Posterior cingulate gyrus (tissue), 11 donors: ENCODE measurements at regions of chr13 and their contacts with region 1.

Region 1: DNA sequence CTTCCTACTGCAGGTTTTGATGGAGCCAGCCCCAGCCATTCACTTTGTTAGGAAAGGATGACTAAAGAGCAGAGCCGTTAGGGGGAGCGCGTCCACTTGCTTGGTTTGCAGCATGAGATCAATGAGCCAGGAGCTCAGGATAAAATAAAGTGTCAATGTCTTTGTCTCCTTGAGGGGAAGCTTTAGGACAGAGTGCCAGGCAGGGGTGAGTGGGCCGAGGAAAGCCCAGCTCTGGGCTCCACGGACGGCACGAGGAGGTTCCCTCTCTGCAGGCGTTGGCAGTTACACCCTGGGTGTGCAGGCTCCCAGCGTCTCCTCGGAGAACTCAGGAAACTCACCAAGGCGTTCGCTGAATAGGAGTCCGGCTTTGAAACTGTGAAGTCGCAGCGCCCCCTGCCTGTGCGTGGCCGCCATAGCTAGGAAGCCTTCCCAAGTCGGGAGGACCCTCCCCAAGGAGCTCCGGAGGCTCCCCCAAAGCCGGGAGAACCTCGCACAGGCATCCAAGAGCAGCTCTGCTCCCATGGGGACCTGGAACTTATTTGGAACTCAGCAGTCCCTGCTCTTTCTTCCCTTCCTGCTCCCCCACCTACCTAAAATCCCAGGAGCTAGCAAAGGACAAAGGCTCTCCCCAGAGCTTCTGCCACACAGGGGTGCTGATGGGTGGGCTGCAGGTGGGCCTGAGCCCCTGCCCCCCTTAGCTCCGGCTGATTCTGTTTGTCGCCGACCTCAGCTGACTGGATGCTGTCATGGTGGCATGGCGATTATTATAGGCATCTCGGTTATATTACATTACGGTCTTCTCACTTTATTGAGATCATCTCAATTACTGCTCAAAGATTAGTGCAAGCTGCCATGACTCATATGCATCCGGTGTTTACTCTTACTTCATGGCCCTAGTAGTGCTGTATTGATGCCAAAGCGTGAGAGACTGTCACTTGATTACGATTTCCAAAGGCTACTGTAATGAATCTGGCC is 34.4 kb downstream of the GSX1 start:
- DNase-seq: peak; percentile 63 to 98 (median 82)

Region 2: DNA sequence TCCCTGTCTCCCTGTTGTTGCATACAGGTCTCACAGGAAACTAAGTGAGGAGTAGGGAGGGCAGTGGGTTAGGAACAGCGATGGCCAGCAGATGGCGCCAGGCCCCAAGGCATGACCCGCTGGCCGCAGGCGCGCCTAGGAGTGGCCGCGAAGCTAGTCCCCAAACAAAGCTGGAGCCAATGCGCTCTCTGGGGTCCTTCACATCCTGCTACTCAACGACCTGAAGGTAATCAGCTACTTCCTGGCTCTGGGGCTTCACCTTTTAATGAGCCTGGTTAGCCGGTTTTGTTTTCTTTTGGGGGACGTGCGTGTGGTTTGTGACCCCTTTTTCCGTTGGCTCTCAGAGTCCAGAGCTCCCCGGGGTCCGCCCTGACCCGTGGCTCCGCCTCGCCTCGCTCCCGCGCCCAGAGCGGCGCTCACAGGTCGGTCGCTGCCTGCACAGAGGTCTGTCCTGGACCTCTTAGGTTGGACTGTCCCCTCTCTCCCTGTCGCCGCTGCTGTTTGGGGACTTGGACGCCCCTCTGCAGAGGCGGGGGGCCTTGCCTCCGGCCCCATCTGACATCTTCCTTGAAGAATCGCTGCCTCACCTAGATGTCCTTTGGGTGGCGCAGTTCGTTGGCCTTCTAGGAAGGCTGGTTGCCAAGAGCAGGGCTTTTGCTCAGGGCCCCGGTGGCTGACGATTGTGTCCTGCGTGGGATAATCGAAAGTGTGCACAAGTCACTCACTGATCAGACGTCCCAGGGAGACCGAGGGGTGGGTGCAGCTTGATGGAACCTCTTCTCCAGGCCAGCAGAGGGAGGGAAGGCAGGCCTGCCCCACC is 464.4 kb before region 1 on chr13:
- intact Hi-C with region 1: loop called (anchors 1 kb)
- DNase-seq: peak; percentile 73 to 97 (median 86)

Region 3: GRCh38 chr13:27533155-27533643 is 293.5 kb before region 1 on chr13:
- intact Hi-C with region 1: loop called (anchors 1 kb)
- DNase-seq: peak; percentile 57 to 97 (median 86)

Region 4: DNA sequence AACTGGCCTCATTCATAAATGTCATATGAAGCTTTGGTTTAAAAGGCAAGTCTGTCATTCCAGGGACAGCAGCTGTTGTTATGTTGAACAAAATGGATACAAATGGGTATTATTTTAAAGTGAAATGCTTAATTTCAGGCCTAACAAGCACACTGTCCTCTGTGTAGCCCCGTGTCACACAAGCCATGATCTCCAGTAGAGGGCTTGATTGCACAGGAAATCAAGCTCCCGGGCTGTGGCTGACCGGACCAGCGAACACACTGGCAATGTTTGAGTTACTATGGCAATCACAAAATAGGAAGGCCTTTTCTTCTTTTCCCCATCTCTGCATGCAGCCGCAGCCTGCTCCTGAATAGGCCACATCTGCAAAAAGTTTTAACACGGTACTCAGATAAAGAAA is 98.4 kb before region 1 on chr13:
- intact Hi-C with region 1: loop called (anchors 2 kb)
- DNase-seq: peak in 6 of 10 donors; percentile 19 to 91 (median 43)

Region 5: DNA sequence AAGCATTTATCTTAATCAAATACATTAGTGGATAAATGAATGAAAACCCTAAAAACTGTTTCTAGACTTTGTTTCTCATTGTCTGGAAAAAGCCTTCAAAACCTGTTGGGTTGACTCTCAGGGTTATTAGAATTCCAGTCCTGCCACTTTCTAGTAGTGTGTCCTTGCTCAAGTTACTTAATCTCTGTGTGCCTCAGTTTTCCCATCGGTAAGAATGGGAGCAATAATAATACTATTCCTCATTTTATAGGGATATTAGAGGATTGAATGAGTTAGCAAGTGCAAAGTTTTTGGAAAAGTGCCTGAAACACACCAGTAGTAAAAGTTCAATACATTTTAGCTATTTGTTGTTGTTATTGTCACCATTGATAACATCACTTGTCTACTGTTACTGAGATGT is 158.9 kb after region 1 on chr13:
- intact Hi-C with region 1: loop called (anchors 2 kb)
- DNase-seq: no peak